CD4-positive, alpha-beta T cell (primary cell): ENCODE measurements at regions of chr17 and their contacts with region 1.

Region 1: DNA sequence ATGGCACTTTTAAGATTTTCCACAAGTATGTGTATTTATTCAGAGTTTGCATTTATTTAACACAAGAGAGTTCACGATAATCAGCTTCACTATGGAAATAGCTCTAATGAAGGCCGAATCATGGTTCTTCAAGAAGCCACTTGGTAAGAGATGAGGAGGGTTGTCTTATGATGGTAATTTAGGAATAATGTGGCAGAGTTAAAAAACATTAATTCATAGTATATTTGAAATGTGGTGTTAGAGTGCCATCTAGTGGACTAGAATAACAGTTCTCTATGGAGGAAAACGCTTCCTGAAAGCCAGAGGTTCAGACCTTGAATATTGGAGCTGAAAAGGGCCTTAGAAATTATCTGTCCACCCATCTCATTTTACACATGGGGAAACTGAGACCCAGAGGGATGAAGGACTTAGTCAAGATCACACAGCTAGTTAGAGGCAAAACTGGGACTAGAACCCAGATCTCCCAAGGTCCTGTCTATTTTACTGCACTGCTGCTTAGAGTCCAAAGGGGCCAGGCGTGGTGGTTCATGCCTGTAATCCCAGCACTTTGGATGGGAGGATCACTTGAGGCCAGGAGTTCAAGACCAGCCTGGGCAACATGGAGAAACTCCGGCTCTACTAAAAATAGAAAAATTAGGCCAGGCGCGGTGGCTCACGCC is 33.8 kb upstream of the KPNB1 start:
- DNase-seq: peak in 4 of 14 experiments; percentile 2 to 75 (median 64)
- ATAC-seq: peak; percentile 61
- H3K4me3 ChIP-seq: no peak overlapping the region
- H3K4me3 Mint-ChIP-seq: no peak overlapping the region
- H3K27ac ChIP-seq: no peak overlapping the region
- H3K27ac Mint-ChIP-seq: peak overlapping the region; percentile 1
- H3K4me1 ChIP-seq: no peaks in the 10 kb centered on the region
- H3K4me1 Mint-ChIP-seq: no peaks in the 10 kb centered on the region
- H3K27me3 ChIP-seq: no peaks in the 10 kb centered on the region
- H3K27me3 Mint-ChIP-seq: no peaks in the 10 kb centered on the region
- CTCF ChIP-seq: peak; percentile 83

Region 2: GRCh38 chr17:47363171-47363570 is 252.7 kb before region 1 on chr17:
- CTCF ChIA-PET with region 1: interaction called, 3 read pairs
- POLR2A ChIA-PET with region 1: no interaction called
- intact Hi-C with region 1: loop called (anchors 2 to 5 kb)
- DNase-seq: no peak
- ATAC-seq: no peak
- H3K4me3 ChIP-seq: no peak overlapping the region
- H3K4me3 Mint-ChIP-seq: no peak overlapping the region
- H3K27ac ChIP-seq: no peak overlapping the region
- H3K27ac Mint-ChIP-seq: no peak overlapping the region
- H3K4me1 ChIP-seq: no peaks in the 10 kb centered on the region
- H3K4me1 Mint-ChIP-seq: no peaks in the 10 kb centered on the region
- H3K27me3 ChIP-seq: no peaks in the 10 kb centered on the region
- H3K27me3 Mint-ChIP-seq: no peaks in the 10 kb centered on the region
- CTCF ChIP-seq: no peak